ENCODE measurements at regions of chr11 and their contacts with region 1.

Region 1: GRCh38 chr11:27698872-27699474 is 1.3 kb downstream of the BDNF start:
- DNase-seq: peak; percentile 60
- H3K4me3 ChIP-seq: no peak overlapping the region
- H3K27ac ChIP-seq: no peak overlapping the region
- H3K4me1 ChIP-seq: no peaks in the 10 kb centered on the region
- CTCF ChIP-seq: peak; percentile 80

Region 2: GRCh38 chr11:28529540-28530410 is 830.8 kb after region 1 on chr11:
- CTCF ChIA-PET with region 1: no interaction called
- POLR2A ChIA-PET with region 1: interaction called, 5 read pairs
- intact Hi-C with region 1: loop called (anchors 1 kb)
- DNase-seq: peak; percentile 44
- H3K4me3 ChIP-seq: no peak overlapping the region
- H3K27ac ChIP-seq: no peak overlapping the region
- H3K4me1 ChIP-seq: no peaks in the 10 kb centered on the region
- CTCF ChIP-seq: peak; percentile 76

Region 3: DNA sequence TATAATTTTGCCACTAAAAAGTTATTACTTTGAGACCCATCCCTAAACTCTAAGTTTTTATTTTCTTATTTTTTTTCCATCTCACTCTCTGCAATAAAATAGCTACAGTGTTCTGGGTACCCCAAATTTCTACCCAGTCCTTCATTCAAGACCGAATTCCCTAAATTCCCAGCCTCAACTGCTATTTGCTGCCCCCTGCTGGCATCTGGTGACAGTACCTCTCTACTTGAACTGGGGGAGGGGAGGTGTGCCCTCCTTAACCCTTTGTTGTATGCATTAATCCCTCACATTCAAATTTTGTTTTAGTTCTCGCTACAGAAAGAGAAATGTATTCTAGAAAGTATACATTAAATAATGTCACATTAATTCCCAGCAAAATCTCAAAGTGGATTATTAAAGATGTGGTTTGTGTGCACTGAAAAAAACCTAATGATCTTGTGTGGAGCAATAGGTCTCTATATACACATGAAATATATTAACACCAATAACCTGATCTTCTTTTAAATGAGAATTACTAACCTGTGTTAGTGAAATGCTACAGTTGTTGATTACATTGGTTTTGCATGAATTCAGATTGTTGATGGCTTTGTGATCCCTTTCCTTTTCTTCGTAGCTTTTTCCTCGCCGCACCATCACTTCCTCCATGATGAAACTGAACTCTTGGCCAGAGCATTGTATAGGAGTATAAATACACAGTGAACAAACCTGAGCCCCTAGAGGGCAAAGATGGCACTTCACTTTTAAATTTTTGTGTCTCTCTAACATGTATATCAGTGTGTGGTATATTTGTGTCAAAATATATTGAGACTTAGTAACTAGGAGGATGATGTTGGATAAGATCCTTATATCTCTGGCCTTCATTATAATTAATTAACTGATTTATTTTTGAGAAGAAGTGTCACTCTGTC is 999.2 kb after region 1 on chr11:
- CTCF ChIA-PET with region 1: no interaction called
- POLR2A ChIA-PET with region 1: no interaction called
- intact Hi-C with region 1: loop called (anchors 2 kb)
- DNase-seq: peak; percentile 43
- H3K4me3 ChIP-seq: no peak overlapping the region
- H3K27ac ChIP-seq: no peak overlapping the region
- H3K4me1 ChIP-seq: no peaks in the 10 kb centered on the region
- CTCF ChIP-seq: peak; percentile 90

Region 4: GRCh38 chr11:29159552-29160465 is 1460.8 kb after region 1 on chr11:
- CTCF ChIA-PET with region 1: no interaction called
- POLR2A ChIA-PET with region 1: no interaction called
- intact Hi-C with region 1: loop called (anchors 5 kb)
- DNase-seq: peak; percentile 21
- H3K4me3 ChIP-seq: no peak overlapping the region
- H3K27ac ChIP-seq: no peak overlapping the region
- H3K4me1 ChIP-seq: no peaks in the 10 kb centered on the region
- CTCF ChIP-seq: peak; percentile 77

Region 5: GRCh38 chr11:29333993-29334775 is 1635.2 kb after region 1 on chr11:
- CTCF ChIA-PET with region 1: no interaction called
- POLR2A ChIA-PET with region 1: no interaction called
- intact Hi-C with region 1: loop called (anchors 2 kb)
- DNase-seq: peak; percentile 27
- H3K4me3 ChIP-seq: no peak overlapping the region
- H3K27ac ChIP-seq: no peak overlapping the region
- H3K4me1 ChIP-seq: no peaks in the 10 kb centered on the region
- CTCF ChIP-seq: peak; percentile 75